K562 (cell line): ENCODE measurements at regions of chr9 and their contacts with region 1.

Region 1: DNA sequence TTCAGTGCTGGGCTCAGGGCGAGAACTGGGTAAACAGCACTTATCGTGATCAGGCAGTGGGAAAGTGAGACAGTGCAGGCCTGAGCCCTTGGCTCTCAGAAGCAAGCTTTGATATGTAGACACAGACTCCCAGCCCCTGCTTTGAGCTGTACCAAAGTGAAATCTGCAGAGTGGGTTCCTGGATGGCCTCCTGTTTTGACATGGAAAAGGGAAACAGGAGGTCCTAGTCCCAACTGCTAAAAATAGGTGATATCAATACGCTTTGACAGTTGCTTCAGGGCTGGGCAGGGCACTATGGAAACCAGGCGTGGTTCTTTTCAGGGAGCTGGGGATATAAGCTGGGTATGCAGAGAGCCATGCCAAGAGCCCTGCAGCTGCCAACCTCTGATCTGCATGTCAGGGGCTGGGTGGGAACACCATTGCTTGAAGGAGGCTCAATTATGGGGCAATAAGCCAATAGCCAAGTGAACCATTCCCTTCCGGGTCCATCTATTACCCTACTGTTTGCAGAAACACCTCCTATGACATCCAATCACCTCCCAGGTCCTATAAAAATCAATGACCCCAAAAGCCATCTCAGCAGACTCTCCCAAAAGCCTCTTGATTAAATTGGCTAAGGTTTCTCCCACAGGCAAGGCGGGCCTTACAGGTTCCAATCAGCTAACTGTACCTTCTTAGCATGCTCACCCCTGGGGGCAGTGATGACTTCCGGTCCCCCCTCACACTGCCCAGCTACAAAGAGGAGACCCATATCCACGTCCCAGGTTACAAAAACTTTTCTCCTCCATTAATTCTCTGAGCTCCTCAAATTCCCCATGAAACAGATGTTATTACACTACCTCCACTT is 45.8 kb downstream of the EPB41L4B start:
- DNase-seq: no peak
- ATAC-seq: no peak
- H3K4me3 ChIP-seq: no peak overlapping the region
- H3K27ac ChIP-seq: no peak overlapping the region
- H3K4me1 ChIP-seq: peaks cover 0 to 3% of the 10 kb centered on the region in 2 experiments; a peak in 1 of 5 replicates
- H3K27me3 ChIP-seq: peaks cover 7 to 53% of the 10 kb centered on the region in 2 experiments; a peak in 4 of 5 replicates
- CTCF ChIP-seq: no peak
- EP300 ChIP-seq: no peak
- POLR2A ChIP-seq: no peak
- RAD21 ChIP-seq: no peak

Region 2: GRCh38 chr9:109213290-109214121 is 61.6 kb before region 1 on chr9:
- CTCF ChIA-PET with region 1: no interaction called
- POLR2A ChIA-PET with region 1: no interaction called
- in situ Hi-C with region 1: no loop called
- intact Hi-C with region 1: loop called (anchors 10 kb)
- DNase-seq: no peak
- ATAC-seq: no peak; the same call in 2 of the 3 replicates
- H3K4me3 ChIP-seq: no peak overlapping the region
- H3K27ac ChIP-seq: no peak overlapping the region
- H3K4me1 ChIP-seq: no peaks in the 10 kb centered on the region
- H3K27me3 ChIP-seq: peaks cover 8 to 22% of the 10 kb centered on the region in 2 experiments
- CTCF ChIP-seq: no peak
- EP300 ChIP-seq: no peak
- POLR2A ChIP-seq: no peak
- RAD21 ChIP-seq: no peak

Region 3: GRCh38 chr9:109499631-109500410 is 224.7 kb after region 1 on chr9:
- CTCF ChIA-PET with region 1: no interaction called
- POLR2A ChIA-PET with region 1: no interaction called
- in situ Hi-C with region 1: no loop called
- intact Hi-C with region 1: no loop called
- DNase-seq: no peak
- ATAC-seq: peak; percentile 49; the same call in 2 of the 3 replicates
- H3K4me3 ChIP-seq: no peak overlapping the region
- H3K27ac ChIP-seq: no peak overlapping the region
- H3K4me1 ChIP-seq: peaks cover 0 to 6% of the 10 kb centered on the region in 2 experiments; a peak in 2 of 5 replicates
- H3K27me3 ChIP-seq: peaks cover 21 to 30% of the 10 kb centered on the region in 2 experiments
- CTCF ChIP-seq: no peak
- EP300 ChIP-seq: no peak
- POLR2A ChIP-seq: no peak
- RAD21 ChIP-seq: no peak